ENCODE measurements at regions of chr6 and their contacts with region 1.

Region 1: GRCh38 chr6:108648191-108648590 is 87.5 kb downstream of the FOXO3 start:
- DNase-seq: no peak
- ATAC-seq: no peak
- H3K4me3 ChIP-seq: no peak overlapping the region
- H3K27ac ChIP-seq: peak overlapping the region; percentile 89 to 94 (median 92)
- H3K4me1 ChIP-seq: peaks cover 98 to 100% of the 10 kb centered on the region in 2 donors
- H3K27me3 ChIP-seq: no peaks in the 10 kb centered on the region
- CTCF ChIP-seq: no peak
- POLR2A ChIP-seq: no peak

Region 2: GRCh38 chr6:108632441-108632840 is 15.8 kb before region 1 on chr6:
- in situ Hi-C with region 1: no loop called
- intact Hi-C with region 1: loop called (anchors 2 kb)
- DNase-seq: peak in 1 of 2 donors; percentile 43
- ATAC-seq: peak; percentile 61 to 88
- H3K4me3 ChIP-seq: no peak overlapping the region
- H3K27ac ChIP-seq: peak overlapping the region; percentile 27 to 63 (median 52)
- H3K4me1 ChIP-seq: peaks cover 94 to 100% of the 10 kb centered on the region in 2 donors
- H3K27me3 ChIP-seq: no peaks in the 10 kb centered on the region
- CTCF ChIP-seq: no peak
- POLR2A ChIP-seq: no peak